Endothelial cell of umbilical vein (primary cell): ENCODE measurements at regions of chr5 and their contacts with region 1.

Region 1: GRCh38 chr5:143124593-143124992 is 278.9 kb downstream of the NR3C1 start:
- DNase-seq: no peak
- H3K4me3 ChIP-seq: no peak overlapping the region
- H3K27ac ChIP-seq: no peak overlapping the region
- H3K4me1 ChIP-seq: peaks cover 16% of the 10 kb centered on the region
- H3K27me3 ChIP-seq: peaks cover 3 to 7% of the 10 kb centered on the region in 2 experiments
- CTCF ChIP-seq: no peak
- POLR2A ChIP-seq: no peak

Region 2: GRCh38 chr5:143063175-143063970 is 61.2 kb before region 1 on chr5:
- CTCF ChIA-PET with region 1: interaction called, 5 read pairs
- POLR2A ChIA-PET with region 1: interaction called, 5 read pairs
- dilution Hi-C with region 1: no loop called
- intact Hi-C with region 1: loop called (anchors 2 kb)
- DNase-seq: no peak
- H3K4me3 ChIP-seq: no peak overlapping the region
- H3K27ac ChIP-seq: peak overlapping the region; percentile 12
- H3K4me1 ChIP-seq: peaks cover 59% of the 10 kb centered on the region
- H3K27me3 ChIP-seq: no peaks in the 10 kb centered on the region
- CTCF ChIP-seq: no peak
- POLR2A ChIP-seq: no peak

Region 3: GRCh38 chr5:143135832-143136551 is 11.4 kb after region 1 on chr5:
- CTCF ChIA-PET with region 1: interaction called, 18 read pairs
- POLR2A ChIA-PET with region 1: no interaction called
- dilution Hi-C with region 1: no loop called
- intact Hi-C with region 1: no loop called
- DNase-seq: no peak
- H3K4me3 ChIP-seq: no peak overlapping the region
- H3K27ac ChIP-seq: no peak overlapping the region
- H3K4me1 ChIP-seq: no peaks in the 10 kb centered on the region
- H3K27me3 ChIP-seq: no peaks in the 10 kb centered on the region
- CTCF ChIP-seq: no peak
- POLR2A ChIP-seq: no peak

Region 4: DNA sequence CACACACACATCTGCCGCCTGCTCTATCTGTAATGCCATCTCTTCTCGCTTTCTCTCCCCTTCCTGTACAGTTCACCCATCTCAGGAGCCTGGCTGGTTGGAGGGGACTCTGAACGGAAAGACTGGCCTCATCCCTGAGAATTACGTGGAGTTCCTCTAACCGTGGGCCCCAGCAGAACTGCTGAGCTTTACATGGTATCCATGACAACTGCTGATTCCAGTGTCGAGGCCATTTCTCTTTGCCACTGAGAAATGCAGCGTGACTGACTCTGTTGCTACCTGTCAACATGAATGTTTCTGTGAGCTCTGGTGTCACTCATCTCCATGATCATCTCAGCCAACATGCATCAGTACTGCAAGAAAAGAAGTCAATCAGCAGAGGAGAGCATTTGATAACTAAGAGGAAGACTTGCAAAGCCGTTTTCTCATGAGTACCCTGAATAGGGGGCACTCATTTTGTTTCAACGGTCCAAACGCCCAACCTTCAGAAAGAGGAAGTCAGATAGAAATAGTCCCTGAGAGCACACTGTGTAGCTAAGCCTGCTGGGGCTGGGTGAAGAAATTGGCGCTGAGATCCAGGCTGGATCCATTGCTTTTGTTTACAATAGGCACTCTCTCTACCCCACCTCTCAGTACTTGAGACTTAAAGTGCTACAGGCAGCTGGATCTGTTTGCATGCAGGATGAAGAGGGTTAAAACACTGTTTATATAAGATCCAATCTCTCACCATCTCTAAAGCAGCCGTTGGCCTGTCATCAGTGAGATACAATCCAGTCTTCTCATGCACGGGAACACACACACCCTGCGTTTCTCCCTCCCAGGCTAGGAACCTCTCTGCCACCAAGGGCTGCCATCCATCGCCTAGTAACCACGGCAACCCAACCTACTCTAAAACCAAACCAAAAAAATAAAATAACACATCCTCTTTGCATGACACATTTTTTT is 98.0 kb after region 1 on chr5:
- CTCF ChIA-PET with region 1: interaction called, 5 read pairs
- POLR2A ChIA-PET with region 1: no interaction called
- dilution Hi-C with region 1: no loop called
- intact Hi-C with region 1: loop called (anchors 1 kb)
- DNase-seq: no peak
- H3K4me3 ChIP-seq: no peak overlapping the region
- H3K27ac ChIP-seq: no peak overlapping the region
- H3K4me1 ChIP-seq: peaks cover 20% of the 10 kb centered on the region
- H3K27me3 ChIP-seq: no peaks in the 10 kb centered on the region
- CTCF ChIP-seq: no peak
- POLR2A ChIP-seq: no peak

Region 5: GRCh38 chr5:144191998-144192397 is 1067.4 kb after region 1 on chr5:
- CTCF ChIA-PET with region 1: no interaction called
- POLR2A ChIA-PET with region 1: no interaction called
- dilution Hi-C with region 1: no loop called
- intact Hi-C with region 1: loop called (anchors 10 kb)
- DNase-seq: peak; percentile 88
- H3K4me3 ChIP-seq: no peak overlapping the region
- H3K27ac ChIP-seq: peak overlapping the region; percentile 88
- H3K4me1 ChIP-seq: peaks cover 44% of the 10 kb centered on the region
- H3K27me3 ChIP-seq: no peaks in the 10 kb centered on the region
- CTCF ChIP-seq: peak; percentile 43 to 60
- POLR2A ChIP-seq: no peak